Aorta (tissue), 5 donors: ENCODE measurements at regions of chr11 and their contacts with region 1.

Region 1: DNA sequence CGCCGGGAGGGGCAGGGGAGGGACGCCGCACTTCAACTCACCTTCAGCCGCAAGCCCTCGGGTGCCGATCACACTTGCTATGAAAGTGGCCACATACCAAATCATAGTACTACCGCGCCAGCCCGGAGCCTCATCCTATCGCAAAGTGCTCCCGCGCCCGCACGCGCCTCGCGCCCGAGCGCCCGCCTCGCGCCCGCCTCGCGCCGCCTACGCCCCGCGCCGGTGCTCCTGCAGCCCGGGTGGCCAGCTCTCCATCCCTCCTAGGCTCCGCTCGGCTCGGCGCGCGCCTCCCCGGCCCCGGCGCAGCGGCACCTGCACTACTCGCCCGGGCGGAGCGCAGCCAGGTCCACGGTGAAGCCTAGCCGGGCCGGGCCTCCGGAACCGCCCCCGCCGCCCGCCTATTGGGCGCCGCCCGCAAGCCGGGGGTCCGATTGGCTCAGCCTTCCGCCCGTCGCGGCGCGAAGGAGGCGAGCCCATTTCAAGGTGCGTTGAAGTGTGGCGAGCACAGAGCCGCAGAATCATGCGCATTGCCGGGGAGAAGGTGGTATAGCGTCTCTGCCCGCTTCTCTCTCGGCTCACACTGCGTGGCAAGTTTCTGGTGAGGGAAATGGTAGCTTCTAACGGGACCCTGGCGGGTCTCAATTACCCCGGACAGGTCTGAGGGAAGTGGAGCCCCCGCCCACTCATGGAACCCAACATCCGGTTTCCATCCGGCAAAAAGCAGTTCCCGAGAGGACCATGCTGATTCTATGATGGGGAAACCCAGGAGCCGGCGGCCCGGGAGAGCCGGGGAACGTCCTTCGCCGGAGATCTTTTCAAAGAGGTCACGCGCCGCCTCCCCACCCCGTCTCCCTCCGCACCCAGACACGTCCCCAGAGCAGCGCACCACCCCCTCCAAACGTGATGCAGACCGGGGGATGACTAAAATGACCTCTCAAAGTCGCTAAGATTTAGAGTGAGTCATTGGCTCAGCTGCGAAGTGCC is at the start of gene IGSF9B:
- DNase-seq: peak; percentile 86 to 95
- ATAC-seq: peak; percentile 91
- H3K4me3 ChIP-seq: peak within 1 kb of the TSS; percentile 40 to 74
- H3K27ac ChIP-seq: peak within 1 kb of the TSS; percentile 44 to 93
- H3K4me1 ChIP-seq: peaks cover 3 to 4% of the 10 kb centered on the region in 2 donors
- H3K27me3 ChIP-seq: no peaks in the 10 kb centered on the region
- total RNA-seq, gene IGSF9B: 59.7 to 93.9 TPM

Region 2: DNA sequence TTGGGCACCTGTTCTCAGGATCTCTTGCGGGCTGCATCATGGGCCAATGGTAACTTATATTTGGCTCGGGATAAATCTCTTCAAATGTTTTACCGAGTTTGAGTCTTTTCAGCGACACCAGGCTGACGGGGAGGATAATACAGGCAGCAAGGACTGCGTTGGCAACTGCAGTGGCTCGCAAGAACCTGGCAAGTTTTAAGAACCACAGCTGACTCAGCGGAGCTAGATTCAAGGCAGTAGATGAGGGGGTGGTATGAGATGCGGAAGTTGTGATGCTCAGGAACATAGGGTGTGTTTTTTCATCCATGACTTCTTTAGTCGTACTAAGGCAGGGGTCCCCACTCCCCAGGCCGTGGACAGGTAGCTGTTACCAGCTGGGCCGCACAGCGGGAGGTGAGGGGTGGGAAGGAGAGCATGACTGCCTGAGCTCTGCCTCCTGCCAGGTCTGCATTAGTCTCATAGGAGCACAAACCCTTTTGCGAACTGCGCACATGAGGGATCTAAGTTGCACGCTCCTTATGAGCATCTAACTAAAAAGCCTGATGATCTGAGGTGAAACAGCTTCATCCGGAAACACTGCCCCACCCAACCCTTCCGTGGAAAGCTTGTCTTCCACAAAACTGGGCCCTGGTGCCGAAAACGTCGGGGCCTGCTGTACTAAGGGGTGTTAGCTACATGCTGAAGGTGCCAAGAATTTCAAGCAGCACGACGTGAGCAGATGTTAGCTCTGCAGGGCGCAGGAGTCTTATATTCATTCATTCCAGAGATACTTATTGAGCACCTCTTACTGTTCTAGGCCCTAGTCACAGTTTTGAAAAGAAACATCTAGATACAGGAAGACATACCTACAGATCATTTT is 105.6 kb after region 1 on chr11:
- intact Hi-C with region 1: no loop called
- DNase-seq: no peak
- ATAC-seq: no peak
- H3K4me3 ChIP-seq: no peak overlapping the region
- H3K27ac ChIP-seq: no peak overlapping the region
- H3K4me1 ChIP-seq: no peaks in the 10 kb centered on the region
- H3K27me3 ChIP-seq: no peaks in the 10 kb centered on the region

Region 3: GRCh38 chr11:134139873-134140331 is 183.0 kb after region 1 on chr11:
- intact Hi-C with region 1: loop called in 1 of 2 experiments (anchors 10 kb)
- DNase-seq: no peak
- ATAC-seq: peak; percentile 93
- H3K4me3 ChIP-seq: no peak overlapping the region
- H3K27ac ChIP-seq: peak overlapping the region; percentile 55 to 84
- H3K4me1 ChIP-seq: no peaks in the 10 kb centered on the region
- H3K27me3 ChIP-seq: no peaks in the 10 kb centered on the region